ENCODE measurements at regions of chr14 and their contacts with region 1.

Region 1: GRCh38 chr14:91872517-91873470 is 5.5 kb upstream of the TC2N start:
- DNase-seq: peak in 8 of 9 donors; percentile 32 to 84 (median 78)
- ATAC-seq: peak; percentile 59
- H3K4me3 ChIP-seq: peak overlapping the region; percentile 56
- H3K4me3 Mint-ChIP-seq: peak overlapping the region; percentile 84 to 96 (median 90)
- H3K27ac ChIP-seq: peak overlapping the region; percentile 91
- H3K27ac Mint-ChIP-seq: peak overlapping the region; percentile 95 to 100 (median 99)
- H3K4me1 ChIP-seq: peaks cover 72 to 92% of the 10 kb centered on the region in 2 donors
- H3K4me1 Mint-ChIP-seq: peaks cover 76 to 100% (median 96%) of the 10 kb centered on the region in 7 donors
- H3K27me3 ChIP-seq: no peaks in the 10 kb centered on the region
- H3K27me3 Mint-ChIP-seq: no peaks in the 10 kb centered on the region

Region 2: GRCh38 chr14:91323671-91324605 is 548.9 kb before region 1 on chr14:
- CTCF ChIA-PET with region 1: no interaction called
- POLR2A ChIA-PET with region 1: no interaction called
- intact Hi-C with region 1: loop called (anchors 10 kb)
- DNase-seq: peak; percentile 90 to 95 (median 92)
- ATAC-seq: peak; percentile 94
- H3K4me3 ChIP-seq: peak overlapping the region; percentile 39
- H3K4me3 Mint-ChIP-seq: peak overlapping the region; percentile 77 to 98 (median 84)
- H3K27ac ChIP-seq: peak overlapping the region; percentile 81
- H3K27ac Mint-ChIP-seq: peak overlapping the region; percentile 94 to 100 (median 99)
- H3K4me1 ChIP-seq: peaks cover 48 to 60% of the 10 kb centered on the region in 2 donors
- H3K4me1 Mint-ChIP-seq: peaks cover 52 to 91% (median 82%) of the 10 kb centered on the region in 7 donors
- H3K27me3 ChIP-seq: no peaks in the 10 kb centered on the region
- H3K27me3 Mint-ChIP-seq: no peaks in the 10 kb centered on the region

Region 3: GRCh38 chr14:91836119-91836881 is 36.5 kb before region 1 on chr14:
- CTCF ChIA-PET with region 1: interaction called, 4 read pairs
- POLR2A ChIA-PET with region 1: interaction called, 46 read pairs
- intact Hi-C with region 1: loop called (anchors 1 to 2 kb)
- DNase-seq: peak; percentile 71 to 92 (median 86)
- ATAC-seq: peak; percentile 94
- H3K4me3 ChIP-seq: peak overlapping the region; percentile 61
- H3K4me3 Mint-ChIP-seq: peak overlapping the region; percentile 71 to 96 (median 90)
- H3K27ac ChIP-seq: peak overlapping the region; percentile 79
- H3K27ac Mint-ChIP-seq: peak overlapping the region in 8 of 9 donors; percentile 86 to 97 (median 91)
- H3K4me1 ChIP-seq: peaks cover 36 to 41% of the 10 kb centered on the region in 2 donors
- H3K4me1 Mint-ChIP-seq: peaks cover 40 to 93% (median 87%) of the 10 kb centered on the region in 7 donors
- H3K27me3 ChIP-seq: no peaks in the 10 kb centered on the region
- H3K27me3 Mint-ChIP-seq: peaks cover 0 to 6% (median 0%) of the 10 kb centered on the region in 5 donors

Region 4: DNA sequence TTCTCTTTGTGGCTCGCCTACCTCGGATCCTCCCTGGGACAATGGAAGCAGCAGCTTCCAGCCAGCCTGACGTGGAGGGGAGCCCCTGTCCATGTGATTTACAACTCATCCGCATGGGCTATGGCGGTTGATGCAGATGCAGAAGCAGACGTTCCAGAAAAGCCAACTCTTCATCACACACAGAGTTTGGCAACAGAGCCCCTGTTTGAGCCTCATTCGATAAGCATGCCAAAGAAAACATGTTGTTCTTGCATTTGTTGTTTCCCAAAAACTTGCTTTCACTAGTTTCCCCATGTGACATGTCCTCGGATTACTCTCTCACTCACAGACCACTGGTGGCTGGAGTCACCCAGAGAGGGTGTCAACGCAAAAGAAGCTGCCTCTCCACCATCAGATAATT is 11.0 kb after region 1 on chr14:
- CTCF ChIA-PET with region 1: interaction called, 9 read pairs
- POLR2A ChIA-PET with region 1: interaction called, 131 read pairs
- intact Hi-C with region 1: loop called (anchors 1 kb)
- DNase-seq: no peak
- ATAC-seq: no peak
- H3K4me3 ChIP-seq: no peak overlapping the region
- H3K4me3 Mint-ChIP-seq: no peak overlapping the region
- H3K27ac ChIP-seq: no peak overlapping the region
- H3K27ac Mint-ChIP-seq: peak overlapping the region in 6 of 9 donors; percentile 12 to 75 (median 42)
- H3K4me1 ChIP-seq: peaks cover 19 to 21% of the 10 kb centered on the region in 2 donors
- H3K4me1 Mint-ChIP-seq: peaks cover 33 to 48% (median 38%) of the 10 kb centered on the region in 7 donors
- H3K27me3 ChIP-seq: no peaks in the 10 kb centered on the region
- H3K27me3 Mint-ChIP-seq: no peaks in the 10 kb centered on the region

Region 5: DNA sequence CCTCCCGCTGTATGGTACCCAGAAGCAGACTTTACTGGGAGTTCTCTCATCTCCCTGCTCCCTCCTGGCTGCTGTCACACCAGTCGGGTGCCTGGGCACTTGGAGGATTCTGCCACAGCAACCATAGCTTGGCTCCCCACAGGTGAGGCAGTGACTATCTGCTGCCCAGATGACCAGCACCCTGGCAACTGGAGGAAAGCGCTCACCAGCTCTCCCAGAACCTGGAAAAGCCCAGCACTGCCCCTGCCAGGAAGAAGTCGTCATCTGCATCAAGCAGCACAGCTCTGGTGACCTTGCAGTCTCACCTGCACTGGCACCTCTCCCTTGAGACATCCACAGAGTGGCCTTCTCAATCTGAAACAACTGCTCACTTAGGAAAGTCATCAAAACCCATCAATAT is 26.4 kb after region 1 on chr14:
- CTCF ChIA-PET with region 1: interaction called, 3 read pairs
- POLR2A ChIA-PET with region 1: interaction called, 131 read pairs
- intact Hi-C with region 1: no loop called
- DNase-seq: peak in 1 of 9 donors; percentile 21
- ATAC-seq: no peak
- H3K4me3 ChIP-seq: no peak overlapping the region
- H3K4me3 Mint-ChIP-seq: no peak overlapping the region
- H3K27ac ChIP-seq: no peak overlapping the region
- H3K27ac Mint-ChIP-seq: peak overlapping the region in 1 of 9 donors; percentile 77
- H3K4me1 ChIP-seq: no peaks in the 10 kb centered on the region
- H3K4me1 Mint-ChIP-seq: peaks cover 2 to 33% (median 17%) of the 10 kb centered on the region in 7 donors
- H3K27me3 ChIP-seq: no peaks in the 10 kb centered on the region
- H3K27me3 Mint-ChIP-seq: no peaks in the 10 kb centered on the region

Region 6: DNA sequence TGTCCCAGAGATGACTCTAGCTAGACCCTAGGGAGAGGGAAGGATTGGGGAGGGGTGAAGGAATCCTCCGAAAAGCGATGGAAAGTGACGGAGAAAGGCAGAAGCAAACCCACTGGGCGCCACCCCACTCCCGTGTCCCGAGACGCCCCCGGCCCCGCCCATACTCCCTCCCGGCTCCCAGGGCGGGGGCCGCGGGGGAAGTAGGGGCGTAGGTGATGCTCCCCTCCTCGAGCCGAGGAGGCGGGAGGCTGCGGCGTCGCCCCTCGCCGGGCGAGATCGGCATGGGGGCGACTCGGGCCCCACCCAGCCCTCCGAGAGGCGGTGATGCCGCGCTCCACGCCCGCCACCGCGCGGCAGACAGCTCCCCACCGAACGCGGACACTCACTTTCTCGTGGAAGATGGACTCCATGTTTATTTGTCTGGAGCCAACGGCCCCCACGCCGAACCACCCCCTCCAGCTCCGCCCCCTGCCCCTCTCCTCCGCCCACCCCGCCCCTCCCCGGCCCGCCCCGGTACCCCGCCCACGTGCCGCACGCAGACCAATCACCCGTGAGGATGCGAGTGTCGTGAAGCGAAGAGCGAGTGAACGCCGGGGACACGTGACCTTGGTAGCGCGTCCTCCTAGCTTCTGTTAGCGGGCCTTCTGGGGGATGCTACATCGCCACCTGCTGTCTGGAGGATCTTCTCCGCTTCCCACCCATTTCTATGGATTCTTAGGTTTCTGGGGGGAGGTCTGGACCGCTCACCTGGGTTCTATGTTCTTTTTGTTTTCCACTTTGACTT is 233.5 kb after region 1 on chr14 and contains the start of gene ATXN3:
- CTCF ChIA-PET with region 1: no interaction called
- POLR2A ChIA-PET with region 1: no interaction called
- intact Hi-C with region 1: loop called in 1 of 2 experiments (anchors 2 kb)
- DNase-seq: peak; percentile 75 to 97 (median 93)
- ATAC-seq: peak; percentile 95
- H3K4me3 ChIP-seq: peak within 1 kb of the TSS; percentile 82
- H3K4me3 Mint-ChIP-seq: peak within 1 kb of the TSS; percentile 88 to 100 (median 98)
- H3K27ac ChIP-seq: peak within 1 kb of the TSS; percentile 91
- H3K27ac Mint-ChIP-seq: peak within 1 kb of the TSS; percentile 82 to 96 (median 92)
- H3K4me1 ChIP-seq: peaks cover 5 to 17% of the 10 kb centered on the region in 2 donors
- H3K4me1 Mint-ChIP-seq: peaks cover 39 to 72% (median 61%) of the 10 kb centered on the region in 7 donors
- H3K27me3 ChIP-seq: no peaks in the 10 kb centered on the region
- H3K27me3 Mint-ChIP-seq: no peaks in the 10 kb centered on the region
- total RNA-seq, gene ATXN3: 27.8 to 54.9 (median 36.9) TPM

Region 7: GRCh38 chr14:92161521-92161920 is 288.7 kb after region 1 on chr14:
- CTCF ChIA-PET with region 1: no interaction called
- POLR2A ChIA-PET with region 1: no interaction called
- intact Hi-C with region 1: no loop called
- DNase-seq: no peak
- ATAC-seq: no peak
- H3K4me3 ChIP-seq: no peak overlapping the region
- H3K4me3 Mint-ChIP-seq: no peak overlapping the region
- H3K27ac ChIP-seq: no peak overlapping the region
- H3K27ac Mint-ChIP-seq: no peak overlapping the region
- H3K4me1 ChIP-seq: no peaks in the 10 kb centered on the region
- H3K4me1 Mint-ChIP-seq: peaks cover 0 to 10% (median 4%) of the 10 kb centered on the region in 7 donors
- H3K27me3 ChIP-seq: no peaks in the 10 kb centered on the region
- H3K27me3 Mint-ChIP-seq: no peaks in the 10 kb centered on the region

Measured in naive thymus-derived CD4-positive, alpha-beta T cell (primary cell).